Activated CD4-positive, alpha-beta memory T cell treated with anti-CD3 and anti-CD28 coated beads, Interleukin-2, amount 10 ng/mL, durations not matched to agents 7 days and 5 days (primary cell): ENCODE measurements at regions of chr12 and their contacts with region 1.

Region 1: DNA sequence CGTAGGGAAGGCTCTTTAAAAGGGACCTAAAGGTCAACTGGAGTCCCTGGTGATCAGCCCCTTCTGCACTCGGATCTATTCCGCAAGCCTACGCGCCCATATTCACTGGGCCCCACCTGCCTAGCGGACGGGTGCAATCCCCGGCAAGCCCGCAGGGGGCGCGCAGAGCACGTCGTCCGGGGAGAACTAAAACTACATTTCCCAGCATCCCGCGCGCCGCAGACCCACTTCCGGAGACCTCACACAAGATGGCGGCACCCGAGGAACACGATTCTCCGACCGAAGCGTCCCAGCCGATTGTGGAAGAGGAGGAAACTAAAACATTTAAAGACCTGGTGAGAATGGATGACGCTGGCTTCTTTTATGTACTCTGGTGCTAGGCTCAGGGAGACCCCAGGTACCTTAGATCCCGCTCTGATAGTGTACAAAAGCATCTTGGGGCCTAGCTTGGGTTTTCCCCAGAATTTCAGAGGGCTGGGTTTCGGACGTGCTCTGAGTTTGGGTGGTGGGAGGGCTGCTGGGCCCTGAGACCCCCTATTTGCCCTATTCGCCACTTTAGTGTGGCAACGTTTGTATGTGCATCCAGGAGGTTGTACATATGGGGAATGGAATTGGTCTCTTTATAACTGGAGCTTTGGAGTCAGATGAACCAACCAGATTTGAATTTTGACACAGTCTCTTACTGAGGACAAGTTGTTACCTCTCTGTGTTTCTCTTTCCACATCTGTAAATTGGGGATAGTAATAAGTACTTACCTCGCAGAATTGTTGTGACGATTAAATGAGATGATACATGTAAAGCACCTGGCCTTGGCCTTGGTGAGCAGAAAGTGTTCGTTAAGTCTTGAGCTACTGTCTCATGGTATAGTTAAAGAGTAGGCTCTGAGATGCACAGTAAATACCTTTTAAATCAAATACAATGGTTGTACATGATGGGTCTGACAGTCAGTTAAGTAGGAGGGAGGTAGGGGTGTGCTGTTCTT is at the start of gene DDX47:
- DNase-seq: peak; percentile 97
- H3K4me3 Mint-ChIP-seq: peak within 1 kb of the TSS; percentile 93
- H3K27ac Mint-ChIP-seq: peak within 1 kb of the TSS; percentile 85
- H3K4me1 Mint-ChIP-seq: peaks cover 77% of the 10 kb centered on the region
- H3K27me3 Mint-ChIP-seq: no peaks in the 10 kb centered on the region
- total RNA-seq, gene DDX47: 49.1 to 53.2 TPM

Region 2: DNA sequence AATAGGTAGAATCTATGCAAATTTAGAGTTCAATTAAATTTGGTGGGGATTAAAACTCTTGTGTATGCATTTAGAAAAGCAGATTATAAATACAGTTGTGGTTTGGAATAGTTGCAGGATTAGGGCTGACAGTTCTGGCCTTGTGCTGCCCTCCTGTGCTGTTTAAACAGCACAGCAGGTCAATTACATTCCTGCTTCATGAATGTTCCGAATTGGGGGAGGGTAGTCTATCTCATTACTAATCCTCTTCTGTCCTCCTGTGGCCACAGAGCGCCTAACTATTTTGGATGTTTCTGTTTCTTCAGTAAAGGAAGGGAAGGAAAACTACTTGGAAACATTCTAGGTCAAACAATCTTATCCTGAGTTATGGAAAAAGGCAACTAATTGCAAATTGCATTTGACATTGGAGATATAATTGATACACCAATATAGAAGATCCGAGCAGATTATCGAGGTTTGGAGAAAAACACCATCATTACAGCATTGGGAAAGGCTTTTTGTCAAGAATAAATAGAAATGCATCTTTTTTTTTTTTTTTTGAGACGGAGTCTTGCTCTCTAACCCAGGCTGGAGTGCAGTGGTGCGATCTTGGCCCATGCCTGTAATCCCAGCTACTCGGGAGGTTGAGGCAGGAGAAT is 108.7 kb before region 1 on chr12:
- CTCF ChIA-PET with region 1: no interaction called
- POLR2A ChIA-PET with region 1: no interaction called
- DNase-seq: no peak
- H3K4me3 Mint-ChIP-seq: no peak overlapping the region
- H3K27ac Mint-ChIP-seq: no peak overlapping the region
- H3K4me1 Mint-ChIP-seq: peaks cover 27% of the 10 kb centered on the region
- H3K27me3 Mint-ChIP-seq: no peaks in the 10 kb centered on the region

Region 3: DNA sequence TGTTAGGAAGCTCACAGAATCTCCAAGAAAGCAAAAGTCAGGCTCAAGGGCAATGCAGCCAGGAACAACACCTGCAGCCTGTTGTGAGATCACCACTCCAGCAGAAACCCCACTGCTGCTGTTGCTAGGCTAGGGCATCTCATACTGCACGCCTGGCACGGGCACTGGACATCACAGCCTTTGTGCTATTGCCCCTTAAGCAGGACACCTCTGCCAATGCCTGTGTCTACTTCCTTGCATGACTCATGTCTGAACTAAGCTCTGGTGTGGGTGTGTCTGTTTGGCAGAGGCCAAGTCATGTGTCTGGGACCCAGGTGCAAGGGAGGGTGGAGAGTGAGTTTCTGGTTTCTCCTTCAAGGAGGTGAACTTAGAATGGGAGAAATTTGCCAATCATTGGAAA is 10.2 kb before region 1 on chr12:
- CTCF ChIA-PET with region 1: interaction called, 42 read pairs
- POLR2A ChIA-PET with region 1: interaction called, 23 read pairs
- DNase-seq: peak; percentile 71
- H3K4me3 Mint-ChIP-seq: peak overlapping the region; percentile 37
- H3K27ac Mint-ChIP-seq: peak overlapping the region; percentile 79
- H3K4me1 Mint-ChIP-seq: peaks cover 54% of the 10 kb centered on the region
- H3K27me3 Mint-ChIP-seq: no peaks in the 10 kb centered on the region